ENCODE measurements at regions of chr7 and their contacts with region 1.

Region 1: DNA sequence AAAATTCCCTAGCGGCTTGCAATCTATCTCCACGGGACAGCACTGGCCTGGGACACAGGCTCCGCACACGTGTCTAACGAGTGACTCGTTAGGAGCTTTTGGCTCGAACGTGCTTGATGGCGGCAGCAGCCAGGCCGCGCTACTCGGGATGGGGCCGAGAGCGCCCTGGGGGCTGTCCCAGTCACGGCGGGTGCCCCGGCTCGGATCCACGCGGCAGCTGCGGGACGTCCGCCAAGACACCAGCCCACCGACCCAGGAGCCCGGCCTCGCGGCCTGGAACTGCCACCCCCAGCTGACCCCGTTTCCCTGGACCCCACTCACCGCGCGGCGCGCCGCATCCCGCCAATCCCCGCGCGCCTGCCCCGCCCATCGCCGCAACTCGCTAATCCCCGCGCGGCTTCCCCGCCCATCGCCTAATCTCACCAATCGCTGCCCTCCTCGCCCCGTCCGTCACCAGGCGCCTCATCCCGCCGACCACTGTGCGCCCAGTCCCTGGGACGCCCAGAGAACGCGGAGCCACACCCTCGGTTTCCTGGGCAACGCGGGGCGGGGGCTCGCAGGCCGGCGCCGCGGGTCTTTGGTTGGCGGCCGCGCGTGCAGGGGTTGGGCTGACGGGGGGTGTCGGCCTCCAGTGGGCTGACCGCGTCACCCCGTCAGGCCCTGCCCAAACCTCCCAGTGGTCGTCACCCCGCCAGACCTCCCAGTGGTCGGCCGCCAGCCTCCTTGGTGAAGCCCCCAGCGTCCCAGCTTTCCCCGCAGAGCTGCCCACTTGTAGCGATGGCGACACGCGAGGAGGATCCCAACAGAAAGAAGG is at the start of gene POLD2:
- DNase-seq: peak; percentile 98
- ATAC-seq: peak; percentile 99
- H3K4me3 Mint-ChIP-seq: peak within 1 kb of the TSS; percentile 92
- H3K27ac Mint-ChIP-seq: peak within 1 kb of the TSS; percentile 68; the same call in 1 of the 2 replicates
- H3K4me1 Mint-ChIP-seq: peaks cover 10% of the 10 kb centered on the region
- H3K27me3 Mint-ChIP-seq: peaks cover 35% of the 10 kb centered on the region
- CTCF ChIP-seq: no peak
- total RNA-seq, gene POLD2: 140 to 154 TPM (median 146 TPM) in 3 replicates

Region 2: GRCh38 chr7:43658718-43659548 is 464.5 kb before region 1 on chr7:
- CTCF ChIA-PET with region 1: no interaction called
- POLR2A ChIA-PET with region 1: no interaction called
- DNase-seq: no peak
- ATAC-seq: no peak
- H3K4me3 Mint-ChIP-seq: 0 out of 2 replicates have a peak overlapping the region, but pooled peaks have one; percentile 4
- H3K27ac Mint-ChIP-seq: peak overlapping the region; percentile 83
- H3K4me1 Mint-ChIP-seq: peaks cover 48% of the 10 kb centered on the region
- H3K27me3 Mint-ChIP-seq: no peaks in the 10 kb centered on the region
- CTCF ChIP-seq: no peak

Region 3: DNA sequence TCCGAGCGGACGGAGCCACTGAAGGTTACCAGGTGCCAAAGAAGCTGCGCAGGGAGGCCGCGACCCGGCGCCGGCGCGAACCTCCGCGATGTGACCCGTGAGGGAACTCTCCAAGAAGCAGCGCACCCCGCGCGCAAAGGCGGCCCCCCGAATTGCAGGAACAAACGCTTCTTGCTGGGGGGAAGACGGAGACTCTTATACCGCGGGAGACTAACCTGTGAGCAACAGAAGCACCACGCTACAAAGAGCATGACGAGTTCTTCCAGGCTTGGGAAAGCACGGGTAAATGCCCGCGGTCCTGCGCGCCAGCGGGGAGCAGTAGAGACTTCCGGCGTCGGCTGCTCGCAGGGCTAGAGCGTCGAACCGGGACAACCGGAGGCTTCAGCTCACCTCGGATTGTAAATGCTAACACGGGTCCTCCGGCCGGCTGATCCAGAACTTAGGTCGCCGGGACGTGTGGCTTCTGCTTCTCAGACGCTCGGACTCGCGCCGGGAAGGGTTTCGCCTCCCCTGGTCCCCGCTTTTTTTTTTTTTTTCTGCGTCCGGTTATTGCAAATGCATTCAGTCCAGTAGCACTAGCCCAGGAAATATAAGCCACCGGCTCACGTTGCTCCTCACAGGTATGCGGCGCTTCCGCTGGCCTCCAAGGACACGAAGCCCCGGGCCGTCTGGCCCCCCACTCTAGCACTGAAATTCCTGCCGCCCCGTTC is 394.0 kb before region 1 on chr7 and contains the start of gene COA1:
- CTCF ChIA-PET with region 1: no interaction called
- POLR2A ChIA-PET with region 1: no interaction called
- DNase-seq: peak; percentile 74
- ATAC-seq: peak; percentile 97
- H3K4me3 Mint-ChIP-seq: peak within 1 kb of the TSS; percentile 96
- H3K27ac Mint-ChIP-seq: peak within 1 kb of the TSS; percentile 90
- H3K4me1 Mint-ChIP-seq: peaks cover 20% of the 10 kb centered on the region
- H3K27me3 Mint-ChIP-seq: no peaks in the 10 kb centered on the region
- CTCF ChIP-seq: no peak
- total RNA-seq, gene COA1: 132 to 148 TPM (median 146 TPM) in 3 replicates

Region 4: GRCh38 chr7:44112231-44113000 is 11.0 kb before region 1 on chr7:
- CTCF ChIA-PET with region 1: interaction called, 13 read pairs
- POLR2A ChIA-PET with region 1: interaction called, 4 read pairs
- DNase-seq: no peak
- ATAC-seq: peak; percentile 38
- H3K4me3 Mint-ChIP-seq: no peak overlapping the region
- H3K27ac Mint-ChIP-seq: no peak overlapping the region
- H3K4me1 Mint-ChIP-seq: 0 out of 2 replicates have a peak, but pooled peaks cover 2% of the 10 kb centered on the region
- H3K27me3 Mint-ChIP-seq: no peaks in the 10 kb centered on the region
- CTCF ChIP-seq: no peak

Region 5: GRCh38 chr7:44307301-44307900 is 184.0 kb after region 1 on chr7:
- CTCF ChIA-PET with region 1: no interaction called
- POLR2A ChIA-PET with region 1: no interaction called
- DNase-seq: peak; percentile 54
- ATAC-seq: peak; percentile 50
- H3K4me3 Mint-ChIP-seq: no peak overlapping the region
- H3K27ac Mint-ChIP-seq: no peak overlapping the region
- H3K4me1 Mint-ChIP-seq: peaks cover 4% of the 10 kb centered on the region; the same call in 1 of the 2 replicates
- H3K27me3 Mint-ChIP-seq: peaks cover 61% of the 10 kb centered on the region
- CTCF ChIP-seq: no peak